Activated naive CD4-positive, alpha-beta T cell treated with anti-CD3 and anti-CD28 coated beads for 36 hours (primary cell): ENCODE measurements at regions of chr11 and their contacts with region 1.

Region 1: DNA sequence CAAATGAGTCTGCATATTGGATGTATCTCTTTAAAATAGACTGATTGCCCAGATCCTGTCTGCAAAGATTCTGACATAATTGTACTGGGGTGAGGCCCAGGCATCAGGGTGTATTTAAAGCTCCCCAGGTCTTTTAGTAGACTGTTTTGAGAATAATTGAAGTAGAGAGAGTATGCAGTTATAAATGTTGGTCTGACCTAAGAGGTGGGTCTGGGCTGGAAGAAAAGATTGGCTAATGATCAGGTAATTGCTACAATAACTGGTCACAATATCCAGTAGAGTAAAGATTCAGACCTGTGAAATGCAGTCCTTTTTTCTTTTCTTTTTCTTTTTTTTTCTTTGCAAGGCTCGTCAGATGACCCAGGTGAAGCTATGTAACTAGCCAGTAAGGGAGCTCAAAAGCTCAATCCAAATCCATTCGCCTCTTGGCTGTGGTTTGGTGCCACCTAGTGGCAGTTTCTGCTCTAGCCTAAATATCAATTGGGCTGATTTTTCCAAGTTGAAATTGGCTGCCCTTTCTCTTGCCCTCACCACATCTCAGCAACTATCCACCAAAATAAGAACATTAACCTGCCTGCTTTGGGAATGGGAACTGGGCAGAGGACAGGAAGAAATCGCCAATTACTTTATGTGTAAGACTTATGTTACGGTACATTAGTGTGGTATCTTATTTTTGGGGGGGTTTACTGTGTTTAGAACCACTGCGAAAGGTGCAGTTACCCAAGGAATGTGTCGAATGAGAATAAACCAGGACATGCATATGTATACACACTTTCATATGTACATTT is 45.9 kb downstream of the ZNF143 start:
- DNase-seq: peak; percentile 90
- H3K4me3 Mint-ChIP-seq: no peak overlapping the region
- H3K27ac Mint-ChIP-seq: no peak overlapping the region
- H3K4me1 Mint-ChIP-seq: no peaks in the 10 kb centered on the region
- H3K27me3 Mint-ChIP-seq: no peaks in the 10 kb centered on the region

Region 2: DNA sequence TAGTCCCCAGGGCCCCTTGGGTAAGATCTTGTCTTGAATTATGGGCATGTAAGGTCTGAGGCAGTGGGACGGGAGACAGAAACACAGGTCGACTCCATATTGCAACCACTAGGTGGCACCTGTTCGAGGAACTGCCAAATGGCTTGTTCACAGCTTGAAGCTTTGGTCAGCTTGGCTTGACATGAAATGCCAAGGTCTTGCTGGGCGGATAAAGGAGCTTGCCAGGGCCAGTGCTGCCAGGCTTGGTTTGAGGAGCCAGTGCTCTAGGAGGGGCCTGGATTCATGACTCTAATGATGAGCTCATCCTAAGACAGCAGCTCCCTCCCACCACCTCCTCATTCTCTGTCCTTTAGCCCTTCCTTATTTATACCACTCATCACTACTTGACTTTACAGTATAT is 491.0 kb before region 1 on chr11:
- CTCF ChIA-PET with region 1: interaction called, 28 read pairs
- intact Hi-C with region 1: loop called (anchors 2 kb)
- DNase-seq: peak; percentile 73
- H3K4me3 Mint-ChIP-seq: no peak overlapping the region
- H3K27ac Mint-ChIP-seq: no peak overlapping the region
- H3K4me1 Mint-ChIP-seq: peaks cover 14% of the 10 kb centered on the region
- H3K27me3 Mint-ChIP-seq: peaks cover under 1% of the 10 kb centered on the region

Region 3: DNA sequence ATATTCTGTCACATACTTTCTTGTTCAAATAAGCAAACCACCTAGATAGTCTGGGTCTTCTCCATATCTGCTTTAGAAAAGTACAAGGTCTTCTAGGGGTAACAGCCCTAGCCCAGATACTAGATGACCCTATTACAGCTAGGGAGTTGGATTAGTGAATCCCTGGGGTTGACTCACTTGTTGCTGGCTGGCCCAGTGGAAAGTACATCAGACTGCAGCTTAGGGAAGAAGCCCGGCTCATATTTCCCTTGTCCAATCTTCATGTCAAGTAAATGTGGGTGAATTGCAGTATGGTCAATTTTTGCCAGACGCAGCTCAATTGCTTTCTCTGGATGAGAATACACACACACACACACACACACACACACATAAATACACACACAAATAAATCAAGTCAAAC is 336.2 kb before region 1 on chr11:
- CTCF ChIA-PET with region 1: interaction called, 25 read pairs
- intact Hi-C with region 1: loop called (anchors 1 kb)
- DNase-seq: no peak
- H3K4me3 Mint-ChIP-seq: no peak overlapping the region
- H3K27ac Mint-ChIP-seq: no peak overlapping the region
- H3K4me1 Mint-ChIP-seq: peaks cover 15% of the 10 kb centered on the region
- H3K27me3 Mint-ChIP-seq: no peaks in the 10 kb centered on the region

Region 4: DNA sequence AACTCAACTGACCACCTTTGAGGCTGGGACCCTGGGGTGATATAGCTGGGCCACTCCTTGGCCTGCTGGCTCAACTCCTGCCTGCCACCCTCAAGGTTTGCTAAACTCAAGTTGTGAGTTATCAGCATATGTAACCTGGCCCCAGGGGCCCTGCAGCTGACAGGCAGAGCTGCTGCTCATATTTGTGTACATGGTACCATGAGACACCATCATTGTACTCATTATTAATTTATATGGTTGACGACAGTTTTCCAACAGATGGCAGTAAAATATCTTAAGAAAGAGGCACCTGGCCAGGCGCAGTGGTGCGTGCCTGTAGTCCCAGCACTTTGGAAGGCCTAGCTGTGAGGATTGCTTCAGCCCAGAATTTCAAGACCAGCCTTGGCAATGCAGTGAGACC is 230.2 kb before region 1 on chr11:
- CTCF ChIA-PET with region 1: interaction called, 3 read pairs
- intact Hi-C with region 1: loop called (anchors 1 kb)
- DNase-seq: no peak
- H3K4me3 Mint-ChIP-seq: no peak overlapping the region
- H3K27ac Mint-ChIP-seq: no peak overlapping the region
- H3K4me1 Mint-ChIP-seq: peaks cover 24% of the 10 kb centered on the region
- H3K27me3 Mint-ChIP-seq: no peaks in the 10 kb centered on the region

Region 5: GRCh38 chr11:9473408-9473807 is 33.3 kb before region 1 on chr11:
- CTCF ChIA-PET with region 1: interaction called, 11 read pairs
- intact Hi-C with region 1: no loop called
- DNase-seq: no peak
- H3K4me3 Mint-ChIP-seq: no peak overlapping the region
- H3K27ac Mint-ChIP-seq: no peak overlapping the region
- H3K4me1 Mint-ChIP-seq: no peaks in the 10 kb centered on the region
- H3K27me3 Mint-ChIP-seq: no peaks in the 10 kb centered on the region

Region 6: DNA sequence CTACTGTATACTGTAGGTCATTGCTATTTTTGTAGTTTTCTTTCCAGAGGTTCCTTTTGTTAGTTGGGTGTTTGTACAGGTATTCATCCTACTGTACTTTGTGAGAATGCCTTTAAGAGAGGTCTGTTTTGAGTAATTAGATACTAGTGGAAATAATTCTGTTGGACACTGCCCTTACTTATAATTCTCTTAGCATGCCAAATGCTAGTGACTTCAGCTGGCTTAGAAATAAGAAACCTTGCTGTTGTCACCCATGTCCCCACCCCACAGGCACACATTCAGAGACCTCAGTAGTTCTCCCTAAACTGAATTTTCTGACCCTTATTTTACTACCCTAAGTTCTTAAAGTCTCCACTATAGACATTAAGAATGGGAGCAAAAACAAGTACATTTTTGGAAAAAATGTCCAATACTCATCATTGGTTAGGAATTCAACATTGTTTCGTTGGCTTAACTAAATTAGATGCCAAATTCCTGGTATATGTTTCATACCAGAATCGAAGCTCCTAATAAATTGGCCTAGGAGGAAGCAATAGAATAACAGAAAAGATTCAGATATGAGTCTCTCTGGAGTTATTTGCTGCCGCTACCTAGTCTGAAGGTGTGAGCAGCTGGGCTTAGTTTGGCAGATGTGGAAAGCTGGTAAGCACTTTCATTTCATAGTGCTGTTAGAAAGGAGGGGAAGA is 17.5 kb before region 1 on chr11:
- CTCF ChIA-PET with region 1: interaction called, 10 read pairs
- intact Hi-C with region 1: no loop called
- DNase-seq: no peak
- H3K4me3 Mint-ChIP-seq: no peak overlapping the region
- H3K27ac Mint-ChIP-seq: no peak overlapping the region
- H3K4me1 Mint-ChIP-seq: no peaks in the 10 kb centered on the region
- H3K27me3 Mint-ChIP-seq: no peaks in the 10 kb centered on the region

Region 7: DNA sequence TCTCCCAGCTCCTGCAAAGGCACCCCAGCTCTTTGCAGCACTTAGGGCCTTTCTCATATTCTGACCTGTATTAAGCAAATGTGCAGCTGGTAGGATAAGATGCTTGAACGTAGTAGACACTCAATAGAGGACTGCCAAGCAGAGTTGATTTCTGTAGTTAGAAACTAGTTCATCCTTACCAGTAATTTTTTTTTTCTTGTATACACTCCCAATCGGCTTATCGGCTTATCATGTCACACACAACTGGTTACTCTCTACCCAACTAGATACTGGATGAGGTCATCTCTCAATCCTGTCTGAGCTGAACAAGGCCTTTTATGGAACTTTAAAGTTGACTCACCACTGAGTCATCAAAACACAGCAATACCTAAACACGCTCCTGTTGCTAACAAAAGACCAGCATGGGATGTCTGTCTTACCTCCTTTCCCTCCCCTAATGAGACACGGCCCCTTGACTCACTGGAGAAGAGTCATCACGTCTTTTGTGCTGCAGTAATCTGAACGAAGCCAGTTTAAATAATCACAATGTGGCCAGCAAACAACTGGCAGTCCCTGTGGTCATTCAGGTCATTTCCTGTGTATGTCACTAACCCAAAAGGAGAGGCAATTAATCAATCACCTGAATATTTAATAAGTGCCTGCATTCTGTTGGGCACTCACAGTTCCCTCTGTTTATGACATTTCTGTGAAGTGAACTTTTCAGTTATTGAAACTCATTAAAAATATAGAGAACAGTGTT is 59.3 kb after region 1 on chr11:
- CTCF ChIA-PET with region 1: no interaction called
- intact Hi-C with region 1: no loop called
- DNase-seq: peak; percentile 81
- H3K4me3 Mint-ChIP-seq: no peak overlapping the region
- H3K27ac Mint-ChIP-seq: peak overlapping the region; percentile 65
- H3K4me1 Mint-ChIP-seq: peaks cover 9% of the 10 kb centered on the region
- H3K27me3 Mint-ChIP-seq: no peaks in the 10 kb centered on the region